Breast epithelium (tissue), 4 donors: ENCODE measurements at regions of chr1 and their contacts with region 1.

Region 1: DNA sequence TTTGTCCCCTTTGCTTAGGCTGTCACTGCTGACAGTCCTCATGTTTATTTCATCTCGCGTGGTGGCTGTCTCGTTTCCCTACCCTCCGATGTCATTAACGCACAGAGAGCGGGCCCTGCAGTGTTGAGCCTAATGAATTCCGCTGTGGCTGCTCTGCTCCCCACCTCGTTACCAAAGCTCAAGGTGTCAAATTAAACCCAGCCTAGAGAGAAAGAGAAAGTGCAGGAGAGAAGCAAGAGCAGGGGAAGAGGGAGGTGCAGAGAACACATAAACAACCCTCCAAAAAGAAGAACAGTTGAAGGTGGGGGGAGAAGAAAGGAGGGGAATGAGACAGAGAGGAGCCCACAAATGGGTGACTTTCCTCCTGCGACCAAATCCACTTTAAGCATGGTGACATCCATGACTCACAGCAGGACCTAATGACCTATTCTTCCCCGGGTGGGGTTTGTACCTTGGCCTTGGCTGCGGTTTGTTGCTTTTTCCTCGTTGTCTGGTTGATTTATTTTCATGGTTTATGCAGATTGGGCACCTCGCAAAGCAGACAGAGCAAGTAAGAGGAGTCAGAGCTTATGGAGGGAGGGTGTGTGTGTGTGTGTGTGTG is 92.5 kb downstream of the PBX1 start:
- DNase-seq: no peak
- H3K4me3 ChIP-seq: no peak overlapping the region
- H3K27ac ChIP-seq: peak overlapping the region in 1 of 2 donors; percentile 3
- H3K4me1 ChIP-seq: no peaks in the 10 kb centered on the region
- H3K27me3 ChIP-seq: no peaks in the 10 kb centered on the region
- CTCF ChIP-seq: no peak
- POLR2A ChIP-seq: no peak

Region 2: GRCh38 chr1:163315773-163316374 is 1335.6 kb before region 1 on chr1:
- intact Hi-C with region 1: loop called (anchors 5 kb)
- DNase-seq: no peak
- H3K4me3 ChIP-seq: no peak overlapping the region
- H3K27ac ChIP-seq: no peak overlapping the region
- H3K4me1 ChIP-seq: no peaks in the 10 kb centered on the region
- H3K27me3 ChIP-seq: no peaks in the 10 kb centered on the region
- CTCF ChIP-seq: peak; percentile 44 to 66 (median 49)
- POLR2A ChIP-seq: no peak

Region 3: DNA sequence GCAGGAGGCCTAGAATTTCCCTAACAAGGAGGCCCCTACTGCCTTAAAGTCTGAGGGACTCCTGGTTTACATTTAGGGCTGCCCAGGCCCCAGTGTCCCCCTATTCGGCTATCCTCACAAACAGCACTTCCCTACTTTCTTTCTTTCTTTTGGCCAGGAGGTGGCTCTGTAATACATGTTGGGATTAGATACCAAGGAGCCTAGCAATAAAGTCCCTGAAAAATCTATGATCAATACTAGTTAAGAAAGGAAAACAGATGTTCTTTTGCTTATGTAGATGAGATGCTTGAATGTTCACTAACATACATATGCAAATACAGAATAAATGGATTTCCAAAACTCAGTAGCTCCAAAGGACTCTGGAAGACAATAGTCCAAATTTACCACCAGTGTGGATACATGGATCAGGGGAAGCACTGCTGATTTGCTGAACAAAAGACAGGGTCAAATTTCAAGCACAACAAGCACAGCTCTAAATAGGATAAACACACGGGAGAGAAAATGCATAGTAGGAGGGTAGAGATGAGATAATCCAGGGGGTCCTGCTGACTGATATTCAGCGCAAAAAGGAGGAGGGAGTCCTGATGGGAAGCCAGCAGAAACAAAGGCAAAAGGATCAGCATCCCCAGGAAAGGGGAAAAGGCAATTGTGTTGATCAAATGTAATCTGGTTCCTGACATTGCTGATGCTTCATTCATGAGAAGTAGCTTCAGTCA is 1089.7 kb before region 1 on chr1:
- intact Hi-C with region 1: no loop called
- DNase-seq: no peak
- H3K4me3 ChIP-seq: no peak overlapping the region
- H3K27ac ChIP-seq: no peak overlapping the region
- H3K4me1 ChIP-seq: no peaks in the 10 kb centered on the region
- H3K27me3 ChIP-seq: no peaks in the 10 kb centered on the region
- CTCF ChIP-seq: peak in 1 of 3 donors; percentile 39
- POLR2A ChIP-seq: no peak

Region 4: DNA sequence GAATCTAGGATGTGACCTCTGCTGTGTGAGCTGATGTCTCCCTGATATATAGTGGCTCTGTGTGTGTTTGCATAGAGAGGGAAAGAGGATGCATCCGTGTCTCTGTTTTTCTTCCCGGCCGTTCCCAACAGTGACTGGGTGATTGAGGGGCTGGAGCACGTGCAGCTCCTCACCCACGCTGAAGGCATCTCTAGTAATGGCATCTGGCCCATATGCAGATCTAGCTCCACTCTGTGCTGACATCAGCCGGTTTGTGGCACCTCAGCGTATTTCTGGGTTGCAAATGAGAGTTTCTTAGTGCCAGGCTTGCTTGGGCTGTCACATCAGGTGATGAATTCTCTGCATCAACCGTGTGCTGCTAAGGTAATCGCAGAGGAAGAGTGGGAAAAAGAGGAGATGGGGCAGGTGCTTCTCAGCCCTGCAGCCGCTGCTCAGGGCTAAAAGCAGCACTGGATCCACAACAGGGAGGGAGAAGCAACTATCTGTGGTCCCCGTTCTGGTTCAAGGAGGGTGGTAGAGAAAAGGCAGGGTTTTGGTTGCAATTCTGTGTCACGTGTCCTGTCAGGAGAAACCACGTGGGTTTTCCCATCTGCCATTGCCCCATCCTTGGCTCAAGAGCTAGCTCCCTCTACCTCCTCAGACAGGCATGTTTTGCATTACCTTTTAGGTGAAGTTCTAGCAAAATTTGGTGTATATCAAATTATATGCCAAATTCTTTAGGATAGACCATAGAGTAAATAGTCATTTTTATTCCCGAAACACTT is 190.4 kb after region 1 on chr1:
- intact Hi-C with region 1: no loop called
- DNase-seq: no peak
- H3K4me3 ChIP-seq: no peak overlapping the region
- H3K27ac ChIP-seq: no peak overlapping the region
- H3K4me1 ChIP-seq: no peaks in the 10 kb centered on the region
- H3K27me3 ChIP-seq: no peaks in the 10 kb centered on the region
- CTCF ChIP-seq: no peak
- POLR2A ChIP-seq: no peak